ENCODE measurements at regions of chr1 and their contacts with region 1.

Region 1: DNA sequence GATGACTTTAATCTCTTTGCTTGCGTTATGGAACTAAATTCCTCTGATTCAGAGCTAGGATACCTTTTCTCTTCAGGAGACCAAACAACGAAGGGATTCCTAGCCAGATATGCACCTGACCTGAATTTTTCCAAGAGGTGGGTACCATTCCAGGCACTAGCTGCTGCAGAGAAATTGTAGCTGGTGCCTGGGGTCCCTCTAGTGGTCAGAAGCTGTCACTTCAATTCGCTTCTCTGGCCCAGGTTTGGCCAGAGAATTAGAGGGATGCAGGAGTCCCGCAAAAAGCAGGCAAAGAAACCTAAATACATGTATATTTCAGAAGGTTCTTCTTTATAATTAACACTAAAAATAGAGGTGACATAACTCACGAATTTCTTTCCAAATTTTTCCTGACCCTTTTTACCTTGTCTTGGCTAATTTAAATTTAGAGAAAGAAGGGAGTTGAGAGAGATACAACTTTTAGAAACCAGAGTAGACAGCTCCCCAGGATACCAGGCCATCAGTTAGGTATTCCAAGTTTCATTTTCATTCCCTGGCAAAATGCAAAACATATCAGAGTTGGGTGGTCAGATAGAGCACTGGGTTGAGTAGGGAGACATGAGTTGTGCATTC is 9.6 kb downstream of the ACKR1 start:
- DNase-seq: peak; percentile 54
- ATAC-seq: peak; percentile 51
- H3K4me3 Mint-ChIP-seq: no peak overlapping the region
- H3K27ac Mint-ChIP-seq: no peak overlapping the region
- H3K4me1 Mint-ChIP-seq: no peaks in the 10 kb centered on the region
- H3K27me3 Mint-ChIP-seq: peaks cover 34% of the 10 kb centered on the region
- CTCF ChIP-seq: peak; percentile 84

Region 2: DNA sequence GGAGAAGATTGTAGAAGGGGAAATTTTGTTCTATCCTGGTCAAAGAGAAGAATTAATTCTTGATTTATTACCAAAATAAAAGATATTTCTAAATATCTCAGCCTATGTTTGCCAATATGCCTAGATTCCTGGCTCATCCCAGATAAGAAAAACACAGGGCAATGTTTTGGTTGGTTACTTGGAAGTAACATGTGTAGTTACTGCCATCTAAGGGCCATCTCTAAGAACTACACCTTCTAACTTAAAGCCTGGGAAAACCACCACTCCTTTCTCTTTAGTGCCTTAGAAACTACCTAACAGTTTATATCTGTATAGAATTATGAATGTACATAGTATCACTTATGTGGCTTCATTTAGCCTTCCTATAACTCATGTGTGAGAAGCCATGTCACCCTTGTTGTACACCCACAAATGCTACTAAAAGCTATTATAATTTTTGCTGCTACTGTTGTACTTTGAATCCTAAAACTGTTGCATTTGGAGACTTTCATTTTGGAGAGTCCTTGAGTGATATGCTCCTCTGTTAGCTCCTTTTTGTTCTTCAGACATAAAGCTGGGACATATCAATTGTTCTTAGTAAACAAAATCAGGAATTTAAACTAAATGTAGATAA is 142.2 kb before region 1 on chr1:
- CTCF ChIA-PET with region 1: no interaction called
- POLR2A ChIA-PET with region 1: no interaction called
- intact Hi-C with region 1: no loop called
- DNase-seq: no peak
- ATAC-seq: no peak
- H3K4me3 Mint-ChIP-seq: no peak overlapping the region
- H3K27ac Mint-ChIP-seq: no peak overlapping the region
- H3K4me1 Mint-ChIP-seq: peaks cover 28% of the 10 kb centered on the region
- H3K27me3 Mint-ChIP-seq: no peaks in the 10 kb centered on the region
- CTCF ChIP-seq: peak; percentile 89

Region 3: GRCh38 chr1:159132271-159132881 is 81.9 kb before region 1 on chr1:
- CTCF ChIA-PET with region 1: interaction called, 202 read pairs
- POLR2A ChIA-PET with region 1: no interaction called
- intact Hi-C with region 1: loop called (anchors 5 kb)
- DNase-seq: peak; percentile 71
- ATAC-seq: peak; percentile 55
- H3K4me3 Mint-ChIP-seq: no peak overlapping the region
- H3K27ac Mint-ChIP-seq: no peak overlapping the region
- H3K4me1 Mint-ChIP-seq: no peaks in the 10 kb centered on the region
- H3K27me3 Mint-ChIP-seq: peaks cover 4% of the 10 kb centered on the region
- CTCF ChIP-seq: peak; percentile 88

Region 4: DNA sequence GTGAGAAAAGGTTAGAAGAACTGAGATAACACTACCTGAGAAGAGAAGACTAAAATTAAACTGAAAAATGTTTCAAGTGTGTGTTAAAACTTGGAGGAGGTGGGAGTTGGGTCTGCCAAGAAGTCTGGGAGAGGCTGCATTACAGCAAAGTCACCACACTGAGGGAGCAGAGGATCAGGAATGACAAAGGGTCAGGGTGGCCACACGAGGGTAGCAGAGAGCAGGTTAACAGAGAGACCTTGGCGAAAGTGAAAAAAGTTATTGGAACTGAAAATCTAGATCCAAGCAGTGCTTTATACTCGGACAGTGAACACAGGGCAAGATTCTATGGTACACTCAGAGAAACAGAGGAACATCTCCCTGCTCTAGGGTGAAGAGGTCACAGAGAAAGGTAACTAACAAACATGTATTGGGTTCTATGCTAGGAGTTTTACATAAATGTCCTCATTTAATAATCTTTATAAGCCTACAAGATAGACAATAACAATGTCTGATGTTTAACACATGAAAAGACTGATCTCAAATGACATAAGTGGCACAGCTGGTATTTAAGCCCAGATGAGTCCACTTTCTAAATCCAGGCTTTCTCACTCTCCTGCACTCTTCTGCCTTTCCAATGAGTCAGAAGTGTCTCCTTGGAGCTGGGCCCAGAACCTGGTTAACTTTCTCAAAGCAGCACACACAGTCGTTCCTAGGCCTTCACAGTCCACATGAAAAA is 53.1 kb before region 1 on chr1:
- CTCF ChIA-PET with region 1: interaction called, 122 read pairs
- POLR2A ChIA-PET with region 1: no interaction called
- intact Hi-C with region 1: loop called (anchors 5 kb)
- DNase-seq: peak; percentile 68
- ATAC-seq: peak; percentile 80
- H3K4me3 Mint-ChIP-seq: no peak overlapping the region
- H3K27ac Mint-ChIP-seq: no peak overlapping the region
- H3K4me1 Mint-ChIP-seq: peaks cover 4% of the 10 kb centered on the region
- H3K27me3 Mint-ChIP-seq: peaks cover 35% of the 10 kb centered on the region
- CTCF ChIP-seq: peak; percentile 95

Region 5: DNA sequence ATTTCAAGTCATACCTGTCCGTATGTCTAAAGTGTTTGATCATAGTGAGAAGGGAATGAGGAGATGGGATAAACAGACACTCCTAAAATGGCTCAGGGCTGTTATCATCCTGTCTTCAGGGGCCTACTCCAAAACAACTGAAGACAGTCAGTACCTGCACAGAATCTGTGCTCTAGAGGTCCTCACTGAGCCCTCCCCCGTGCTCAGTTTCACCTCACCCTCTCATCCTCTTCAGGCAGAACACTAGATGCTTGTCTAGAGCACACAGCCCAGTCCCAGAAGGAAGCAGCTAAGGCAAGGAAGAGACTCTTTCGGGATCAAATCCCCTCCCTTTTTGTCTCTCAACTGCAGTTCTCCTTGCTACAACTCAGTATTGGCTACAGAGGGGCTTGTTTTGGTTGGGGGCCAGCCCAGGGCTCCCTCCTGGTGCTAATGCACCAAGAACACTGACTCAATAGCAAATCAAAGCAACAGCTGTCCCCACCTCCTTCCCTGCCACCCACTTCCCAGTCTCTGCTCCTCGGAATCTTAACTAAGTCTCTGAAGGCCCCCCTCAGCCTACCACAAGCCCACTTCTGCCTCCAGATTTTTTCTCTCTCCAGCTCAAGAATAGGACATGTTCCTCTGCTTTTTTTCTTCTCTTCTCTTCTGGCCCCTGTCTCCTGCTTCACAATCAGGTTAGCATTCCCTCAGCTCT is 32.8 kb before region 1 on chr1:
- CTCF ChIA-PET with region 1: interaction called, 11 read pairs
- POLR2A ChIA-PET with region 1: no interaction called
- intact Hi-C with region 1: no loop called
- DNase-seq: no peak
- ATAC-seq: no peak
- H3K4me3 Mint-ChIP-seq: no peak overlapping the region
- H3K27ac Mint-ChIP-seq: no peak overlapping the region
- H3K4me1 Mint-ChIP-seq: no peaks in the 10 kb centered on the region
- H3K27me3 Mint-ChIP-seq: peaks cover 44% of the 10 kb centered on the region
- CTCF ChIP-seq: no peak

Region 6: DNA sequence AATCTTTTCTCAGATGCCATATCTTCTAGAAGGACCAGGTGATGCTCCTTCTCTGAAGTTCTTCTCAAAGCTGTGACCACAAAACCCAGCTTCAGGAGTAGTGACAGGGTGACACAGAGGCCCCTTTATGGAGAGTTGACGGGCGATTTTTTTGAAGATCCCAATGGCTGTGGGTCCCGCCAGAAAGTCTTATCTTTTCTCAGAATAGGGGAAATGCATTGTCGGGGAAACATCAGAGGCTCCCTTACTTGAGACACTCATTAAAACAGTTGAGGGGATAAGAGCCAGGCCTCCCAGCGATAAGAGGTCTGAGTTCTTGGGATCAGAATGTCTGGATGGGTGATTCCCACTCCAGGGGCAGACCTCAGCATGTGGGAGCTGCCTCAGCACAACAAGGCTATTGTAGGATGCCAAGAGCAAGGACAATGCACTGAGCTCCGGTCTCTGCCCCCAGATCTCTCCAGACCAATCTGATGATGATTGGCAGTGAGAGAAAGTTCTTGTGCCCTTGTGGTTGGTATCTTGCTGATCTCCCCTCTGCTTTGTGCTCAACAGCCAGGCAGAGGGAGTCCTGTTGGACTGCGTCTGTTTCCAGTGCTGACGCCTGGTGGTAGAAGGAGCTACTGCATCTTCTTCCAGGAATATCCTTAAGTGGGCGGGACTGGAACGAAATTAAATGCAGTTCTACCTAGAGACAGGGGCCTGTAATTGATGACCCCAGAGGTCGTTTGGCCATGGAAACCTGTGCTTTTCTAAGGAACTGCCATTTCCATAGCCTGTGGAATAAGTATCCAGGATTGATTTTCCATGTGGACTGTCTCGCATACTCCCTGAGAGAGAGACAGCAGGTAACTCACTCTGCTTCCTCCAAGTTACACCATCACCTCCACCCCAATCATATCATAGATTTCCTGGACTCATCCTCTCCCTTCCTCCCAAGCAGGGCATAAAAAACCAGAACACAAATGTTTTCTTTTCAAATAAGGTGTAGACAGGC is 16.4 kb before region 1 on chr1:
- CTCF ChIA-PET with region 1: interaction called, 65 read pairs
- POLR2A ChIA-PET with region 1: interaction called, 3 read pairs
- intact Hi-C with region 1: no loop called
- DNase-seq: peak; percentile 76
- ATAC-seq: peak; percentile 86
- H3K4me3 Mint-ChIP-seq: no peak overlapping the region
- H3K27ac Mint-ChIP-seq: no peak overlapping the region
- H3K4me1 Mint-ChIP-seq: peaks cover 16% of the 10 kb centered on the region
- H3K27me3 Mint-ChIP-seq: peaks cover 30% of the 10 kb centered on the region
- CTCF ChIP-seq: peak; percentile 80

Region 7: GRCh38 chr1:159229486-159229885 is 15.2 kb after region 1 on chr1:
- CTCF ChIA-PET with region 1: interaction called, 96 read pairs
- POLR2A ChIA-PET with region 1: no interaction called
- intact Hi-C with region 1: no loop called
- DNase-seq: no peak
- ATAC-seq: no peak
- H3K4me3 Mint-ChIP-seq: no peak overlapping the region
- H3K27ac Mint-ChIP-seq: no peak overlapping the region
- H3K4me1 Mint-ChIP-seq: no peaks in the 10 kb centered on the region
- H3K27me3 Mint-ChIP-seq: peaks cover 22% of the 10 kb centered on the region
- CTCF ChIP-seq: no peak

Region 8: GRCh38 chr1:159339536-159339935 is 125.3 kb after region 1 on chr1:
- CTCF ChIA-PET with region 1: no interaction called
- POLR2A ChIA-PET with region 1: no interaction called
- intact Hi-C with region 1: no loop called
- DNase-seq: no peak
- ATAC-seq: no peak
- H3K4me3 Mint-ChIP-seq: no peak overlapping the region
- H3K27ac Mint-ChIP-seq: no peak overlapping the region
- H3K4me1 Mint-ChIP-seq: no peaks in the 10 kb centered on the region
- H3K27me3 Mint-ChIP-seq: peaks cover 5% of the 10 kb centered on the region
- CTCF ChIP-seq: no peak

Region 9: DNA sequence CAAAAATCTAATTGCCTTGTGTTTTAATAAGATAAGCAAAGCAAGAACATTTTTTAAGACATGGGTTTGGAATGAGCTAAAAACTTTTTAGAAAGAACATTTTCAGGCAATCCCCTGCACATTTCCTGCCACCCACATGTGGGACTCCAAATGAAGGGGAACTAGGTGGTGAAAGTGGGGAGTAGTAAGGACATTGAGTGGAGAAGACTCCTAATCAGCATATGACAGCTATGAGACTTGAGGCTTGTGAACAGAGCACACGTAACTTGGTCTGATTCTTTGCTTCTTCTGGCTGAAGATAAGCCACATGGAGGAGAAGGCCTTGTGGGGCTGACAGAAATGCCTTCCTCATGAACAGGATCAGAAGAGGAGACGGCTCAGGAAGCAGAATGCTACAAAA is 138.2 kb after region 1 on chr1:
- CTCF ChIA-PET with region 1: no interaction called
- POLR2A ChIA-PET with region 1: no interaction called
- intact Hi-C with region 1: no loop called
- DNase-seq: no peak
- ATAC-seq: no peak
- H3K4me3 Mint-ChIP-seq: no peak overlapping the region
- H3K27ac Mint-ChIP-seq: no peak overlapping the region
- H3K4me1 Mint-ChIP-seq: no peaks in the 10 kb centered on the region
- H3K27me3 Mint-ChIP-seq: peaks cover 13% of the 10 kb centered on the region
- CTCF ChIP-seq: no peak